Right cardiac atrium (tissue), 5 donors: ENCODE measurements at regions of chr3 and their contacts with region 1.

Region 1: GRCh38 chr3:50611464-50612233 is at the start of gene CISH:
- DNase-seq: peak; percentile 97 to 98 (median 98)
- ATAC-seq: peak; percentile 89 to 90
- H3K4me3 ChIP-seq: peak within 1 kb of the TSS; percentile 58
- H3K27ac ChIP-seq: peak within 1 kb of the TSS; percentile 71
- H3K4me1 ChIP-seq: peaks cover 10% of the 10 kb centered on the region
- H3K27me3 ChIP-seq: no peaks in the 10 kb centered on the region
- total RNA-seq, gene CISH: 9.1 to 27.8 (median 11.2) TPM

Region 2: GRCh38 chr3:50572158-50572557 is 39.5 kb before region 1 on chr3:
- intact Hi-C with region 1: loop called (anchors 1 to 2 kb)
- DNase-seq: peak; percentile 72 to 88 (median 87)
- ATAC-seq: peak; percentile 19 to 28
- H3K4me3 ChIP-seq: no peak overlapping the region
- H3K27ac ChIP-seq: peak overlapping the region; percentile 36
- H3K4me1 ChIP-seq: peaks cover 5% of the 10 kb centered on the region
- H3K27me3 ChIP-seq: no peaks in the 10 kb centered on the region

Region 3: GRCh38 chr3:50671331-50671730 is 59.7 kb after region 1 on chr3:
- intact Hi-C with region 1: loop called in 1 of 4 experiments (anchors 2 kb)
- DNase-seq: peak in 1 of 3 donors; percentile 61
- ATAC-seq: peak in 1 of 2 donors; percentile 22
- H3K4me3 ChIP-seq: no peak overlapping the region
- H3K27ac ChIP-seq: no peak overlapping the region
- H3K4me1 ChIP-seq: no peaks in the 10 kb centered on the region
- H3K27me3 ChIP-seq: no peaks in the 10 kb centered on the region

Region 4: DNA sequence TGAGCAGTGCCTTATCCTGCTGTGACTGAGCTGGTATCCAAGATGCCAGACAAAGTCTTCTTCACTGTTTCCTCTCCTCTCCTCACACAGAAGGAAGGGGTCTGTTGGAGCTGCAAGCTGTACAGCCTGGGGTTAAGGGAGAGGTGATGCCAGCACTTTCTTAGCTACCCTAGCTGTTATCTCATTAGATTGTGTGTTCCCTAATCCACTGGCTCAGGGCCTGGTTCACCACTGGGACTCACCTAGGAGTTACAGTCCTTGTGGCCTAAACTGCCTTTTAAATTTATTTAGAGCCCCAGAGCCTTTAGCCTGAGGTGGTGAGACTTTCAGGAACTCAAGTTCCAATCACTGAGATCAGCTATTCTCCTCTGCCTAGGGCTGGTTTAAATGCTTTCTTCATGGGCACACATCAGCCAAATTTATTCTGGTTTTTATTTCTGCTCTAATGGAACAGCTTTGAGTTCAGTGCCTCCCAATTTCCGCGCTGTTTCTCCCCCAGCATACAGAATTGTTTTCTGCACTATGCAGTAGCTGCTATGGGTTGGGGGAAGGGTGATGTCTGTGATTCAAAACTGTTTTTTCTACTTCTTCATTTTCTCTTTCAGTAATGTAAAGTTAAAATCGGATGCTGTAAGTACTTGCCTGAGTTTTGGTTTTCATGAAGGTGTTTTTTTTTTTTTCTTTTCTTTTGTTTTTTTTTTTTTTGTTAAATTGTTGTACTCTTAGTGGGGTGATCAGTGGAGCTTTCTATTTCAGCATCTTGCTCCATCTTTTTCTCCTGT is 261.9 kb after region 1 on chr3:
- intact Hi-C with region 1: no loop called
- DNase-seq: no peak
- ATAC-seq: no peak
- H3K4me3 ChIP-seq: no peak overlapping the region
- H3K27ac ChIP-seq: no peak overlapping the region
- H3K4me1 ChIP-seq: no peaks in the 10 kb centered on the region
- H3K27me3 ChIP-seq: no peaks in the 10 kb centered on the region

Region 5: DNA sequence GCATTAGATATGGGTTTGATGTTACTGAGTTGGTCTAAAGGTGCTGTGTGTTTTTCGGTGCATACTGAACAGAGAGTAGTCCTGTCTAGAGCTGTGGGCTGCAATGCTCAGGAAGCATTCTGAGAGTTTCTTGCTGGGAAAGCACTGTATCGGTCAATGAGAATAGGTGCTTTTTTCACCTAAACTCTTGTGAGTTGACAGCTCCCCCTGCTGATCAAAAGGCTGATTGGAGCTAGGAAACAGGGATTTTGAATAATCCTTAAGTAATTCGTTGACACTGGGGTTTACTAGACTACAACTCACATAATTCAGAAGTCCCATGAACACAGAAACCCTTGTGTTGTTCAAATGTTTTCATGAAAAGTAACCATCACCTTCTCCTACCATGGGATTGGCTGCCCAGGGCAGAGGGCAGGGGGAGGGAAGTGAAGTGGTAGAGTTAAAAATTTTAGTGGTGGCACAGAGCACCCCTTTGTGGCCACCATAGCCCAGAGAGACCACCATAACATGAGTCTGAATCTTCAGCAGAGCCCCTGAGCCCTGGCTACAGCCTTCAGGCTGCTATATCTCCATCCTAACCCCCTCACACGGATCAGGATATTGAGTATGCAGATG is 760.4 kb after region 1 on chr3:
- intact Hi-C with region 1: loop called in 2 of 4 experiments (anchors 2 to 5 kb)
- DNase-seq: no peak
- ATAC-seq: peak; percentile 22 to 34
- H3K4me3 ChIP-seq: no peak overlapping the region
- H3K27ac ChIP-seq: no peak overlapping the region
- H3K4me1 ChIP-seq: no peaks in the 10 kb centered on the region
- H3K27me3 ChIP-seq: no peaks in the 10 kb centered on the region

Region 6: DNA sequence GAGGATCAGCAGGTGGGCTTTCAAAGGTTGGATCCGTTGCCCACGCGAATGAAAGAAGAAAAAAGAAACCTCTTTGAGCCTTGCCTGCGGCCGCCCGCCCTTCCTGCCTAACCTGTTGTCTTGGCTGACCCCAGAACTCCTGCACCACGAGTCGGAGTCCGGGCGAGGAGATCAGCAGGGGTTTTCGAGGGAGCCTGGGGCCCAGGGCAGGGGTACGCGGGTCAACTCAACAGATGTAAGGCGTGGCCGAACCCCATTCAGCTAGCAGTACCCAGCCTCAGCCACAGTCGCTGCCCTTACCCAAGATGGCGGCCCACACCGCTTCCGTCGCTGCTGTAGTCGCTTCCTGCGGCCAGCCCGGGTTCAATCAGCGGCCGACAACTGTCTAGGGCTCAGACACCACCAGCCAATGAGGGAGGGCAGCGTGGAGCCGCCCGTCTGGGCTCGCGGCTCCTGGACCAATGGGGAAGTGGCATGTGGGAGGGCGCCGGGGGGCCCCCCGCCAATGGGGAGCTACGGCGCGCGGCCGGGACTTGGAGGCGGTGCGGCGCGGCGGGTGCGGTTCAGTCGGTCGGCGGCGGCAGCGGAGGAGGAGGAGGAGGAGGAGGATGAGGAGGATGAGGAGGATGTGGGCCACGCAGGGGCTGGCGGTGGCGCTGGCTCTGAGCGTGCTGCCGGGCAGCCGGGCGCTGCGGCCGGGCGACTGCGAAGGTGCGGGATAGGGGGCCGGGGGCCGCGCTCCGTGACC is 773.3 kb after region 1 on chr3 and contains the start of gene MANF:
- intact Hi-C with region 1: loop called in 2 of 4 experiments (anchors 10 kb)
- DNase-seq: peak; percentile 99
- ATAC-seq: peak; percentile 98 to 99
- H3K4me3 ChIP-seq: peak within 1 kb of the TSS; percentile 71
- H3K27ac ChIP-seq: peak within 1 kb of the TSS; percentile 91
- H3K4me1 ChIP-seq: peaks cover 1% of the 10 kb centered on the region
- H3K27me3 ChIP-seq: no peaks in the 10 kb centered on the region
- total RNA-seq, gene MANF: 51.7 to 120 (median 86.9) TPM